AG04450 (cell line): ENCODE measurements at regions of chr16 and their contacts with region 1.

Region 1: GRCh38 chr16:81403616-81404373 is 40.8 kb upstream of the CMIP start:
- DNase-seq: peak; percentile 8
- H3K4me3 ChIP-seq: peak overlapping the region; percentile 45
- H3K27ac ChIP-seq: no peak overlapping the region
- H3K27me3 ChIP-seq: no peaks in the 10 kb centered on the region
- CTCF ChIP-seq: peak; percentile 92

Region 2: DNA sequence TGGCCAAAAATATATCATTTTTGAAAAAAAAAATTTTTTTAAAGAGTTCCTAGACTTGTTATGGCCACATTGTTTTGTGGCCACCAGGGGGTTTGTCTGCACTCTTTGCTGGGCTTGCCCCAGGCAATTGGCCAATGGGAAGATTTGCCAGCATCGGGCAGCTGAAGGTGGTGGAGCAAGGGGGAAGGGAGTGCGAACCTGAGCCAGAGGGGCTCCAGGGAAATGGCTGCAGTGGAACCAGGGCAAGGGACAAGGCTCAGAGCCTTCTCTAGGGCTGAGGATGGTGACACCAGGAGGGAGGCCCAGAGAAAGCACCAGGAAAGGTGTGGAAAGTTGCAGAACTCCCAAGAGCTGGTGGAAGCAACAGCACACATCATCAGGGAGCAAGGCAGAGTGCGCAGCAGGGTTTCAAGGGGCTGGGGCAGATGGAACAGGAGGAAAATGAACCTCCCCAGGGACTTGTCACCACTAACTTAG is 25.3 kb after region 1 on chr16:
- CTCF ChIA-PET with region 1: interaction called, 11 read pairs
- POLR2A ChIA-PET with region 1: no interaction called
- DNase-seq: no peak
- H3K4me3 ChIP-seq: no peak overlapping the region
- H3K27ac ChIP-seq: no peak overlapping the region
- H3K27me3 ChIP-seq: no peaks in the 10 kb centered on the region
- CTCF ChIP-seq: peak; percentile 68

Region 3: GRCh38 chr16:81623363-81624102 is 219.7 kb after region 1 on chr16:
- CTCF ChIA-PET with region 1: interaction called, 15 read pairs
- POLR2A ChIA-PET with region 1: no interaction called
- DNase-seq: no peak
- H3K4me3 ChIP-seq: no peak overlapping the region
- H3K27ac ChIP-seq: no peak overlapping the region
- H3K27me3 ChIP-seq: no peaks in the 10 kb centered on the region
- CTCF ChIP-seq: peak; percentile 64

Region 4: DNA sequence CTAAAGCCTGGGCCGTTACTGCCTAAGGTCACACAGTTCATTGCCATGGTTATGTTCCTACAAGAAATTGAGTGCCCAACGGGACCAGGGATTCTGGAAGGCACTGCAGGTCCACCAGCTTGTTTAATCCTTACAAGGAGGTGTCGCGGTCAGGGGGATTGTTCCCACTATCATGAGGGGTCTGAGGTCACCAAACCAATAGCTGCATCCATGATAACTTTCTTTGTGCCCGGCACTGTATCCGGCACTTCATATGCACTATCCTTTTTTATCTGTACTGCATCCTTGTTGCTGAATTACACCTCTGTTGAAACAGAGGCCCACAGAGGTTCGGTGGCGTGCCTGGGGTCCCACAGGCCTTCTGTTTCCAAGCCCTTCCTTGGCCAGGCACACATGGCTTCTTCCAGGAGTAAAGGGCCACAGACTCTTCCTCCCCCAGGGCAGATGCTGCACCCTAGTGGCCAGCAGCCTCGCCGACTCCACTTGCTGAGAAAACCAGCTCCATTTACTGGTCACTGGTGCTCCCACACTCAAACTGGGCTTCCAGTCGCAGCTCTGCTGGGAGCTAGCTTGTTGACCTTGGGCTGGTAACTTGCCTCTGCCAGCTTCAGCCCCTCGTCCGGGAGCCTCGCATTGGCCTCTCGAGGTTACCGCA is 293.3 kb after region 1 on chr16:
- CTCF ChIA-PET with region 1: interaction called, 18 read pairs
- POLR2A ChIA-PET with region 1: no interaction called
- DNase-seq: no peak
- H3K4me3 ChIP-seq: no peak overlapping the region
- H3K27ac ChIP-seq: no peak overlapping the region
- H3K27me3 ChIP-seq: peaks cover 3% of the 10 kb centered on the region
- CTCF ChIP-seq: peak; percentile 73

Region 5: DNA sequence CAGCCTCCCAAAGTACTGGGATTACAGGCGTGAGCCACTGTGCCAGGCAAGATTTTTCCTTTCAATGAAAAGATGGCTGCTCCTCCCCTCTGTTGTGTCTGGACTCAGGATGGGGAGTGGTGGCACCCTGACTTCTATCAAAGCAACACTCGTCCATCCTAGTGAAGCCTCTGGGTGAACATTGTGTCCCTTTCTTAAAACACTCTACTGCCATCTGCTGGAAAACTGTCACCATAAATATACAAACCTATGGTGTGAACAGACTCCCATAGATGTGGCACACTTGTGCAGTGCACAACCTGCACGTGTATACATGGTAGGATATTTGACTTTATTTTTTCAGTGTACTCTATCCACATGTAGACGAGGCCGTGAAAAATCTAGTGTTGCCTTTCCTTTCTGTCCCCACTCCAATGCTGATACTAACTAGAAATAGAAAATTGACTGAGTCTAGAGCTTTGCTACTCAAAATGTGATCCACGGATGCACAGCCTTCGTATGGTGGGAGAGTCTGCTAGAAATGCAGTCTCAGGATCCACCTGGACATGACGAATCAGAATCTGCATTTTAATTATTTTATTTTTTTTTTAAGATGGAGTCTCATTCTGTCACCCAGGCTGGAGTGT is 319.4 kb after region 1 on chr16:
- CTCF ChIA-PET with region 1: interaction called, 46 read pairs
- POLR2A ChIA-PET with region 1: no interaction called
- DNase-seq: no peak
- H3K4me3 ChIP-seq: no peak overlapping the region
- H3K27ac ChIP-seq: no peak overlapping the region
- H3K27me3 ChIP-seq: peaks cover 18% of the 10 kb centered on the region
- CTCF ChIP-seq: peak; percentile 71